Activated CD4-positive, alpha-beta memory T cell treated with anti-CD3 and anti-CD28 coated beads, Interleukin-2, amount 10 ng/mL, durations not matched to agents 7 days and 5 days (primary cell): ENCODE measurements at regions of chr11 and their contacts with region 1.

Region 1: GRCh38 chr11:6705905-6706535 is 22.9 kb upstream of the MRPL17 start:
- DNase-seq: peak; percentile 34
- H3K4me3 Mint-ChIP-seq: no peak overlapping the region
- H3K27ac Mint-ChIP-seq: no peak overlapping the region
- H3K4me1 Mint-ChIP-seq: peaks cover 7% of the 10 kb centered on the region
- H3K27me3 Mint-ChIP-seq: no peaks in the 10 kb centered on the region

Region 2: DNA sequence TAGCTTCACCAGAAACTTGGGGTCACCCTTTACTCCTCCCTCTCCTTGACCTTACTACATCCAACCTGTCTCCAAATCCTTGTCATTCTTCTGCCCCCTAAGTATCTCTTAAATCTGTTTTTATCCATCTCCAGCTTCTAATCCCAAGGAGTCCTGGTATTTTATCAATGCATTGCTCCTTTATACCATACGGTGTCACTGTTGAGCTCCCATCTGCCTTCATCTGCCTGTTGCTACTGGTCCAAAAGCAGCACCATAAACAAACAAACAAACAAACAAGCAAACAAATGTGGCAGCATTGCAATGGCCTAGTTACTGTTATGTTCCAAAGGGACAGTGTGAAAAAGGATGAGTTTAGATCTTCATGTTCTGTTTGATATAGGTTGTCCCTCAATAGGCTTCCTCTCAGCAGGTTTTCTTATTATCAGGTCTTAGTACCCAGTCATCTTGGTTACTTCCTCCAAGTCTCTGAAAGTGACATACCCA is 174.7 kb before region 1 on chr11:
- CTCF ChIA-PET with region 1: interaction called, 20 read pairs
- POLR2A ChIA-PET with region 1: no interaction called
- DNase-seq: peak; percentile 29
- H3K4me3 Mint-ChIP-seq: no peak overlapping the region
- H3K27ac Mint-ChIP-seq: no peak overlapping the region
- H3K4me1 Mint-ChIP-seq: peaks cover 10% of the 10 kb centered on the region
- H3K27me3 Mint-ChIP-seq: no peaks in the 10 kb centered on the region

Region 3: DNA sequence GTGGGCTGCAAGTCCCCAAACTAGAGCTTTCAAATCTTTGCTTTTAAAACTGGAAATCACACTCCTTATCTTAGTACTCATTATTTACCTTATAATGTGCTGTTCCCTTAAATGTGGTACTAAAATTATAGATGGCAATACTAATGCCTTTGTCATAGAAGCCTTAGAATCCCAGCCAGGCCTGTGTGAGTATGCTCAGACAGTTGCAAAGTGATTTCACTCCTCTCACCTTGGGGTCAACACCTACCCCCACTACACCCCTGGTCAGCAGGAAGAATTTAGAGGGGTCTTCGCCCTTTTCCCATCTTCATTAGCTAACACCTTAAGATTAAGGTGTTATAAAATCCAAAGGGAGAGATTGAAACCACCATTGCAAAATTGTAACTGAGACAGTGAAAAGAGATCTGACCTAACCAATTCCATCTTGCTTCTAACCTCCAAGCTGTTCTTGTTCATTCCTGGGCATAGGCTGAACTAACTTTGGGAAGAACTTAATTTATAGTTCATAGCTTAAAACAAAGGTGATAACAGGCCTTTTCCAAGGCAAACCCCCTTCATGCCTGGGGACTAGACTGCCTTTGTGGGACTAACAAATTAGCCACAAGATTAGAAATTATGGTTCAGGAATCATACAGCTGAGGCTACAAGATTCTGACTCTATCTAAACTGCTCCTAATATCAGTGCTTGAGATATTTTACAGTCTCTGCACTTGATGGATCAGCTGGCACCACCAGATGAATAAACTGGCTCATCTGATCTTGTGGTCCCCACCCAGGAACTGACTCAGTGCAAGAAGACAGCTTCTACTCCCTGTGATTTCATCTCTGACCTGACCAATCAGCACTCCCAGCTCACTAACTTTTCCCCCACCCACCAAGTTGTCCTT is 12.4 kb before region 1 on chr11:
- CTCF ChIA-PET with region 1: interaction called, 26 read pairs
- POLR2A ChIA-PET with region 1: no interaction called
- DNase-seq: peak; percentile 72
- H3K4me3 Mint-ChIP-seq: no peak overlapping the region
- H3K27ac Mint-ChIP-seq: peak overlapping the region; percentile 44
- H3K4me1 Mint-ChIP-seq: peaks cover 33% of the 10 kb centered on the region
- H3K27me3 Mint-ChIP-seq: no peaks in the 10 kb centered on the region

Region 4: DNA sequence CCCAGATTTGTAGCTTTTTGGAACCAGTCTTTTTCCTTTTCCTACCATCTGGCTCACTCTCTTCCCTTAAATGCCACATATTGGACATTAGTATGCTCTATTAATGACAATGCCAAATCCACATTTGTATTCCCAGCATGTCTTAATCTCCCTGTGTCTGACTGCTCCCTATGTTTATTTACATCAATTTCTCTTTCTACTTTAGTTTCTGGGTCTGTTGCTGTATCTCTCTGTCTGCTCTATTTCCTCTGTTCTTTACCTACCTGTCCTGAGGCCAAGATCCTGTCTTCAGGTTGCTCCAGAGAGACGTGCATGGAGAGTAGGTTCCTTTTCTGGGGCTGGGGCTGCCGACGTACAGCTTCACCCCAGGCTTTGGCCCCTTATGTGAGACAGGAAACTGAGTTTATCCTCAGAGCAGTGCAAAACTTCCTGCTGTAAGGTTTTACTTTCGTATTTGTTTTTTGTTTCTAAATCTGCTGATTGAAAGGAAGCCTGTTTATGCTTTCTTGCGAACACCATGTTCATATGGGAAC is 40.1 kb after region 1 on chr11:
- CTCF ChIA-PET with region 1: interaction called, 11 read pairs
- POLR2A ChIA-PET with region 1: interaction called, 4 read pairs
- DNase-seq: peak; percentile 55
- H3K4me3 Mint-ChIP-seq: no peak overlapping the region
- H3K27ac Mint-ChIP-seq: no peak overlapping the region
- H3K4me1 Mint-ChIP-seq: peaks cover 26% of the 10 kb centered on the region
- H3K27me3 Mint-ChIP-seq: no peaks in the 10 kb centered on the region